AG04450 (cell line): ENCODE measurements at regions of chr6 and their contacts with region 1.

Region 1: GRCh38 chr6:154868143-154868594 is 126.9 kb upstream of the TIAM2 start:
- DNase-seq: peak; percentile 34
- H3K4me3 ChIP-seq: no peak overlapping the region
- H3K27ac ChIP-seq: no peak overlapping the region
- H3K27me3 ChIP-seq: no peaks in the 10 kb centered on the region
- CTCF ChIP-seq: peak; percentile 78

Region 2: GRCh38 chr6:154567695-154568220 is 300.4 kb before region 1 on chr6:
- CTCF ChIA-PET with region 1: no interaction called
- POLR2A ChIA-PET with region 1: no interaction called
- DNase-seq: no peak
- H3K4me3 ChIP-seq: no peak overlapping the region
- H3K27ac ChIP-seq: no peak overlapping the region
- H3K27me3 ChIP-seq: peaks cover 2% of the 10 kb centered on the region
- CTCF ChIP-seq: no peak

Region 3: GRCh38 chr6:154815938-154816820 is 52.0 kb before region 1 on chr6:
- CTCF ChIA-PET with region 1: no interaction called
- POLR2A ChIA-PET with region 1: no interaction called
- DNase-seq: no peak
- H3K4me3 ChIP-seq: no peak overlapping the region
- H3K27ac ChIP-seq: no peak overlapping the region
- H3K27me3 ChIP-seq: no peaks in the 10 kb centered on the region
- CTCF ChIP-seq: no peak

Region 4: DNA sequence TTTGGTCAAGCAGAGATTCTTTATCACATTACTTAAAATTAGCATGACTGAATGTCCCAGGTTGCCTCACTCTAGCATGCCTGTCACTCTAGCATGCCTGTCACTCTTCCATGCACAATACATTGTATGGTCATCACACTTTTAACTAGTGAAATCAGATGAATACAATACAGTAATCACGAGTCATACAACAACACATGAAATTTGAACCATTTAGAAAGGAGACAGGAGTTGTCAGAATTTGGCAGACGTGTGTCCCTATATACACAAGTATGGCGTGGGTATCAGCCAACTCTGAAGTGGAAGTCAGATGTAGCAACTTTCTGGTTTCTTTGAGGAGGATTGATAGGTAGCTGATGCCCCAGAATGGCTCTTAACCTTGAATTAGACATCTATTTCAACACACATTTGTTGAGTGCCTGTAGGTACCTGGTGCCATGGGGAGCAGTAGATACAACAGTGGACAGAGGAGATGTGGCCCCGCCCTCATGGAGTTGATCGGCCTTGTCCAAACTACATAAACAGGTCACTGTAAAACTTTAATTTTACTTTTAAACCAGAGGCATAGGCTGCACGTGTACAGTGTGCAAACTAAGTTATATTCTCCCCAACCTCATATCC is 10.8 kb after region 1 on chr6:
- CTCF ChIA-PET with region 1: interaction called, 22 read pairs
- POLR2A ChIA-PET with region 1: no interaction called
- DNase-seq: no peak
- H3K4me3 ChIP-seq: no peak overlapping the region
- H3K27ac ChIP-seq: no peak overlapping the region
- H3K27me3 ChIP-seq: no peaks in the 10 kb centered on the region
- CTCF ChIP-seq: no peak

Region 5: GRCh38 chr6:154923199-154923869 is 55.2 kb after region 1 on chr6:
- CTCF ChIA-PET with region 1: interaction called, 18 read pairs
- POLR2A ChIA-PET with region 1: no interaction called
- DNase-seq: no peak
- H3K4me3 ChIP-seq: no peak overlapping the region
- H3K27ac ChIP-seq: no peak overlapping the region
- H3K27me3 ChIP-seq: no peaks in the 10 kb centered on the region
- CTCF ChIP-seq: no peak

Region 6: DNA sequence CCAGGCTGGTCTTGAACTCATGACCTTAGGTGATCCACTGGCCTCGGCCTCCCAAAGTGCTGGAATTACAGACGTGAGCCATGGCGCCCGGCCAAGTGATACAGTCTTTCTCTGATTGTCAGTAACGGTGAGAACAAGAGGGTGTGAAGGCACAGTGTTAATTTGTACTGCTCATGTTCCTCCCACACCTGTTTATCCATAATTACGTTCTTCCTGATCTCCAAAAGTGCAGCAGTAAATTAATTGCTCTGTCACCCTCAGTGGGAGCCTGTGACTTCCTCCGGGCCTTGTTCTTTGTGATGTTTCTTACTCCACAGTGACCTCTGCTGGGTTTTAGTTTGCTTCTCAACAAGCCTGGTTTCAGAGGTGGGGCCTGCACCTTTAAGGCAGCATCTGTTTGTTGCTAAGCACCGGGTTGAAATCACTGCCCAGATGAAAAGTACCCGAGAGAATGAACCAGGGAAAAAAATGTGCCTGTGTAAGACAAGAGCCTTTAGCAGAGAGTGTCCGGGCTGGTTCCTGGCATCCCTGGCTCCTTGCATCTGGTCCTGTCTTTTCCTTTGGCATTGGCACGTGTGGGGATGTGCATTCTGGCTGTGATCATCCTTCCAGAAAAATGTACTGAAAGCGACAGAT is 306.5 kb after region 1 on chr6:
- CTCF ChIA-PET with region 1: interaction called, 29 read pairs
- POLR2A ChIA-PET with region 1: no interaction called
- DNase-seq: peak; percentile 55
- H3K4me3 ChIP-seq: no peak overlapping the region
- H3K27ac ChIP-seq: no peak overlapping the region
- H3K27me3 ChIP-seq: no peaks in the 10 kb centered on the region
- CTCF ChIP-seq: peak; percentile 81